CD8-positive, alpha-beta T cell (primary cell): ENCODE measurements at regions of chr17 and their contacts with region 1.

Region 1: GRCh38 chr17:28967221-28968140 is 16.2 kb upstream of the PHF12 start:
- DNase-seq: no peak
- ATAC-seq: no peak
- H3K4me3 ChIP-seq: no peak overlapping the region
- H3K4me3 Mint-ChIP-seq: no peak overlapping the region
- H3K27ac ChIP-seq: no peak overlapping the region
- H3K27ac Mint-ChIP-seq: no peak overlapping the region
- H3K4me1 ChIP-seq: no peaks in the 10 kb centered on the region
- H3K4me1 Mint-ChIP-seq: peaks cover 4% of the 10 kb centered on the region
- H3K27me3 ChIP-seq: peaks cover 0 to 5% of the 10 kb centered on the region in 2 experiments
- H3K27me3 Mint-ChIP-seq: peaks cover 9% of the 10 kb centered on the region
- CTCF ChIP-seq: no peak

Region 2: DNA sequence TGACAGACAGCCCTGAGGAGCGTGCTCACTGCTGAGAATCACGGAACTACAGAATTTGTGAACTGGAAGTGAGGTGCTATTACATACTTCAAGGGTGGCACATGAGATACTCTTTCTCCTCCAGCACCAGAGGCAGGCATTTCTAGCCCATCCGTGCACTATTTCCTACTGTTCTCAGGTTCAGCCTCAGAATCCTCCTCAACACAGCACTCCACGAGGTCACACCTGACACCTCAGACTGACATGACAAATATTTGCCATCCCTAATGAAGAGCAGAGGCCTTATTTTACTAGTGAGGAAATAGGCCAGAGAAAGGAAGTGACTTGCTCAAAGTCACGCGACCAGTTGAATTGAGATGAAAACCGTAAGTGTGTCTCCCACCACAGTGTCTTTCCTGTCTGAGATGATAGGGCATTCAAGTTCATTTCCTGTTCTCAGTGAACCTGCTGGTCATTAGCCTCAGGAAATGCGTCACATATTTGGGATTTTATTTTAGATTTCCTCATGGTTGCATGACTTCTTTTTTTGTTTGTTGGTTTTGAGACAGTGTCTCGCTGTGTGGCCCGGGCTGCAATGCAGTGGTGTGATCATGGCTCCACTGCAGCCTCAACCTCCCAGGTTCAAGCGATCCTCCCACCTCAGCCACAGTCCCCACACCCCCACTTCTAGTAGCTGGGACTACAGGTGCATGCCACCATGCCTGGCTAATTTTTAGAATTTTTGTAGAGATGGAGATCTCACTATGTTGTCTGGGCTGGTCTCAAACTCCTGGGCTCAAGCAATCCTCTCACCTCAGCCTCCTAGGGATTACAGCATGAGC is 14.9 kb after region 1 on chr17:
- CTCF ChIA-PET with region 1: interaction called, 12 read pairs
- POLR2A ChIA-PET with region 1: no interaction called
- intact Hi-C with region 1: loop called in 1 of 2 experiments (anchors 1 kb)
- DNase-seq: peak; percentile 21 to 97 (median 55)
- ATAC-seq: peak; percentile 88
- H3K4me3 ChIP-seq: no peak overlapping the region
- H3K4me3 Mint-ChIP-seq: peak overlapping the region; percentile 23
- H3K27ac ChIP-seq: peak overlapping the region; percentile 49 to 96
- H3K27ac Mint-ChIP-seq: peak overlapping the region; percentile 94
- H3K4me1 ChIP-seq: peaks cover 26% of the 10 kb centered on the region
- H3K4me1 Mint-ChIP-seq: peaks cover 23% of the 10 kb centered on the region
- H3K27me3 ChIP-seq: no peaks in the 10 kb centered on the region
- H3K27me3 Mint-ChIP-seq: no peaks in the 10 kb centered on the region
- CTCF ChIP-seq: no peak

Region 3: DNA sequence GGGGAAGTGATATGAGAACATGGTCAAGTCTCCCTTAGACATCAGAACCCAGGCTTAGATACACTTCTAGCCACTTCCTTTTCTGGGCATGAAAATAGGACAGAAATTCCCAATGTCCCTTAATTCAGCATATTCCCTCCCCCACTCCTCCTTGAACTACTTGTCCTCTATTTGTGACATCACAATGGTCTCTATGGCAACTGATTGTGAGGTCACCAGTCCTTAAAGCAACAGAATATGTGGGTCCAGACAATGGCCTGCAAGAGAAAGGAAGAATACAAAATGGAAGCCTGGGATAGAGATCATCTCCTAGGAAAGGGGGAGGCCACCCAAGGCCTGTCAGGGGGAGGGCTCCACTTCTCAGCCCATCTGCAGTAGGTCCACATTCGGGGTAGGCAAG is 45.1 kb after region 1 on chr17:
- CTCF ChIA-PET with region 1: interaction called, 4 read pairs
- POLR2A ChIA-PET with region 1: no interaction called
- intact Hi-C with region 1: loop called in 1 of 2 experiments (anchors 5 kb)
- DNase-seq: no peak
- ATAC-seq: no peak
- H3K4me3 ChIP-seq: no peak overlapping the region
- H3K4me3 Mint-ChIP-seq: no peak overlapping the region
- H3K27ac ChIP-seq: no peak overlapping the region
- H3K27ac Mint-ChIP-seq: no peak overlapping the region
- H3K4me1 ChIP-seq: no peaks in the 10 kb centered on the region
- H3K4me1 Mint-ChIP-seq: no peaks in the 10 kb centered on the region
- H3K27me3 ChIP-seq: peaks cover 0 to under 1% of the 10 kb centered on the region in 2 experiments
- H3K27me3 Mint-ChIP-seq: peaks cover 43% of the 10 kb centered on the region
- CTCF ChIP-seq: no peak

Region 4: GRCh38 chr17:29102741-29103181 is 135.3 kb after region 1 on chr17:
- CTCF ChIA-PET with region 1: interaction called, 13 read pairs
- POLR2A ChIA-PET with region 1: no interaction called
- intact Hi-C with region 1: no loop called
- DNase-seq: no peak
- ATAC-seq: no peak
- H3K4me3 ChIP-seq: no peak overlapping the region
- H3K4me3 Mint-ChIP-seq: no peak overlapping the region
- H3K27ac ChIP-seq: no peak overlapping the region
- H3K27ac Mint-ChIP-seq: no peak overlapping the region
- H3K4me1 ChIP-seq: no peaks in the 10 kb centered on the region
- H3K4me1 Mint-ChIP-seq: peaks cover 1% of the 10 kb centered on the region
- H3K27me3 ChIP-seq: no peaks in the 10 kb centered on the region
- H3K27me3 Mint-ChIP-seq: no peaks in the 10 kb centered on the region
- CTCF ChIP-seq: no peak

Region 5: GRCh38 chr17:29111816-29112499 is 144.5 kb after region 1 on chr17:
- CTCF ChIA-PET with region 1: interaction called, 368 read pairs
- POLR2A ChIA-PET with region 1: interaction called, 3 read pairs
- intact Hi-C with region 1: loop called (anchors 1 kb)
- DNase-seq: peak; percentile 49 to 79 (median 64)
- ATAC-seq: peak; percentile 88
- H3K4me3 ChIP-seq: no peak overlapping the region
- H3K4me3 Mint-ChIP-seq: no peak overlapping the region
- H3K27ac ChIP-seq: no peak overlapping the region
- H3K27ac Mint-ChIP-seq: no peak overlapping the region
- H3K4me1 ChIP-seq: peaks cover 3% of the 10 kb centered on the region
- H3K4me1 Mint-ChIP-seq: no peaks in the 10 kb centered on the region
- H3K27me3 ChIP-seq: no peaks in the 10 kb centered on the region
- H3K27me3 Mint-ChIP-seq: no peaks in the 10 kb centered on the region
- CTCF ChIP-seq: peak; percentile 57